ENCODE measurements at regions of chr9 and their contacts with region 1.

Region 1: DNA sequence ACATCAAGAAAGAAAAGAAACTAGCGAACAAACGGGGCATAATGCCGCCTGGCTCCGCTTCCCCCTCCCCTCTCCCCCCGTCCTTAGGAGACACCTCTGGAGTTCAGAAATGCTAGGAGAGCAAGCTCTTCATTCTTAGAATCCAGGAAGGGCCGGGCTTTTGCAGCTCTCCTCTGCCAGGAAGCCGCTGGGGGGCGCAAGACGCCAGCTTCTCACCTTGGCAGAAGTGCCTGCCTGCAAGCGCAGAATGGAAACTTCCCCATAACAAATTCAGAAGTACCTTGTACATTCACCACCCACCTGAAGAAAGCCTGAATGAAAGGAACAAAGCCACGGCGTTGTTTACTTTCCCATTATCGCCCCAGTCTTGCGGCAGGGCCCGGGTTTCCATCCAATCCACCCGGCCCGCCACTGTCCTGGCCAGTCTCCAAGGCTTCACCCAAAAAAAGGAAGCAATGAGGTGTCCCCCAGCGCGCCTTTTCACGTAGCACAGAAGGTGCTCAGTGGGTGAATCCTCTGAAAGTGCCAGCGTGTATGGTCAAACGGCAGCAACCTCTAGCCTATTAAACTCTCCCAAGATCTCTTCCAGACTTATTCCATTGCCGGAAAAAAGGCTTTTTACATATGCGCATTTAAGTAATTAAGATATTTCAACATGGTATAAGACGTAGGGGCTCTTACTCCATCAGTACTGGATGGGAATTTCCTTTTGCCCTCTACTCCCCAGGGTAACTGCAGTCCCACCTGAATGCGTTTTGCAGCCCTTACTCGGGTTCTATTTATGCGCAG is 1.6 kb upstream of the GADD45G start:
- DNase-seq: peak; percentile 70
- H3K4me3 ChIP-seq: peak overlapping the region; percentile 47 to 61
- H3K27ac ChIP-seq: peak overlapping the region in 1 of 2 experiments; percentile 93; a peak in 2 of 4 replicates
- H3K4me1 ChIP-seq: peaks cover 24 to 40% of the 10 kb centered on the region in 2 experiments
- H3K27me3 ChIP-seq: peaks cover 21% of the 10 kb centered on the region; the same call in 1 of the 2 replicates
- CTCF ChIP-seq: peak; percentile 92
- EP300 ChIP-seq: no peak
- RAD21 ChIP-seq: peak; percentile 98

Region 2: GRCh38 chr9:89410641-89411350 is 192.4 kb before region 1 on chr9:
- CTCF ChIA-PET with region 1: no interaction called
- POLR2A ChIA-PET with region 1: no interaction called
- DNase-seq: no peak
- H3K4me3 ChIP-seq: no peak overlapping the region
- H3K27ac ChIP-seq: no peak overlapping the region; a peak in 1 of 4 replicates
- H3K4me1 ChIP-seq: peaks cover 0 to 66% of the 10 kb centered on the region in 2 experiments; a peak in 2 of 4 replicates
- H3K27me3 ChIP-seq: no peaks in the 10 kb centered on the region
- CTCF ChIP-seq: no peak
- EP300 ChIP-seq: no peak
- RAD21 ChIP-seq: no peak

Region 3: GRCh38 chr9:89675058-89675742 is 72.0 kb after region 1 on chr9:
- CTCF ChIA-PET with region 1: interaction called, 60 read pairs
- POLR2A ChIA-PET with region 1: interaction called, 134 read pairs
- DNase-seq: peak; percentile 89
- H3K4me3 ChIP-seq: no peak overlapping the region; a peak in 1 of 4 replicates
- H3K27ac ChIP-seq: peak overlapping the region in 1 of 2 experiments; percentile 100; a peak in 2 of 4 replicates
- H3K4me1 ChIP-seq: peaks cover 0 to 68% of the 10 kb centered on the region in 2 experiments; a peak in 3 of 4 replicates
- H3K27me3 ChIP-seq: no peaks in the 10 kb centered on the region
- CTCF ChIP-seq: no peak
- EP300 ChIP-seq: peak in 1 of 2 experiments; percentile 91; a peak in 2 of 4 replicates
- RAD21 ChIP-seq: peak; percentile 47

Region 4: DNA sequence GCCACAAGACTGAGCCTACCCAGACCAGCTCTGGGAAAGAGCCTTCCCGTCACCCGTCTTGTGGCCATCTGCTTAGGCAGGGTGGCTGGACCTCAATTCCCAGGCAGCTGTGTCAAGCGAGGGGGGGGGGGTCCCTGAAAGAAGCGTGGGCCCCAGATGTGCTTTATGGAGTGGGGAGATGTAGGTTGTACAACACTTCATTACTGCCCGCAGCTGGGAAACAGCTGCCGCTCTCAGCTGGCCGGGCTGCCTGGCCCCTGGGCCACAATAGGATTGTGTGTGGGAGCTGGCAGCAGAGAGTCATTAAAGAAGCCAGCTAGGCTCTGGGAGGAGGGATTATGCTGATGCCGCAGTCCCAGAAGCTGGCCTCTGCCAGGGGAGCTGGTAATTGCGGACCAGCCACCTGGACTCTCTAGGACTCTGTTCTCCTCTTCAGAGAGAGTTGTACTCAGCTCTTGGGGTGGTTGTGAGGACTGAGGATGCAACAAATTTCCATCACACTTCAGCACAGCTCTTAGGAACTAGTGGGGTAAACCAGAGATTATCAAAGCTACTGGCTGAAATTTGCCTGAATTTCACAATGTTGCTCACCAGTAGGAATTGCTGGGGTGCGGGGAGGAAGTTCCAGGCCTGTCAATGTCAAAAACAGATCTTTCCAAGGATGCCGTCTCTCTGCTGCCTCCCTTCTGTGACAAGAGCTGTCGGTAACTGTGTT is 147.1 kb after region 1 on chr9:
- CTCF ChIA-PET with region 1: interaction called, 22 read pairs
- POLR2A ChIA-PET with region 1: interaction called, 27 read pairs
- DNase-seq: peak; percentile 71
- H3K4me3 ChIP-seq: no peak overlapping the region
- H3K27ac ChIP-seq: peak overlapping the region in 1 of 2 experiments; percentile 74; a peak in 2 of 4 replicates
- H3K4me1 ChIP-seq: peaks cover 0 to 62% of the 10 kb centered on the region in 2 experiments; a peak in 2 of 4 replicates
- H3K27me3 ChIP-seq: no peaks in the 10 kb centered on the region
- CTCF ChIP-seq: no peak
- EP300 ChIP-seq: peak in 1 of 2 experiments; percentile 40; a peak in 1 of 4 replicates
- RAD21 ChIP-seq: peak; percentile 35

Region 5: DNA sequence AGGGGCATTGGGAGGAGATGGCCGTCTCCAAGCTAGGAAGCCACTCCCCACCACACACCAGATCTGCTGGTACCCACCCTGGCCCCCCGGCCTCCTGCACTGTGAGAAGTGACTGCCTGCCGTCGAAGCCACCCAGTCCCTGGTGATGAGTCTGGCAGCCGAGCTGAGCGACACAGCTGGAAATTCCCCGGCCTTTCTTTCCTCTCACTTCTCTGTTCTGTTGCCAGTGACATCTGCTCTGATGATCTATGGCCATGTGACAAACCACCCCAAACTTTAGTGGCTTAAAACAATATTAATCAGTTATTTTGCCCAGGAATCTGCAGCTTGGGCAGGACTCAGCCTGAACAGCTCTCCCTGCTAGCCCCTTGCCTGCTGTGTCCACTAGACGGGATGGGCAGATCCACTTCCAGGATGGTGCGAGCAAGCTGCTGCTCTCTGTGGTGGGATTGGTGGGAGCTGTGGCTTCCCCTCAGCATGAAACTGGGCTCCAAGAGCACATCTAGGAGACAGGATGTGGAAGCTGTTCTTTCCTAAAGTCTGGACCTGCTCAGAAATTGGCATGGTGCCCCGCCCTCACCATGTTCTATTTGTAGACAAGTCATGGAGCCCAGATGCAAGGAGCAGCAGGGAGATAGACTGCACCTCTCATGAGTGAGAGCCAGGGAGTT is 212.9 kb after region 1 on chr9:
- CTCF ChIA-PET with region 1: interaction called, 10 read pairs
- POLR2A ChIA-PET with region 1: interaction called, 5 read pairs
- DNase-seq: no peak
- H3K4me3 ChIP-seq: no peak overlapping the region
- H3K27ac ChIP-seq: no peak overlapping the region
- H3K4me1 ChIP-seq: peaks cover 0 to 25% of the 10 kb centered on the region in 2 experiments; a peak in 1 of 4 replicates
- H3K27me3 ChIP-seq: no peaks in the 10 kb centered on the region
- CTCF ChIP-seq: no peak
- EP300 ChIP-seq: no peak
- RAD21 ChIP-seq: no peak

Region 6: GRCh38 chr9:90070931-90071660 is 467.9 kb after region 1 on chr9:
- CTCF ChIA-PET with region 1: interaction called, 12 read pairs
- POLR2A ChIA-PET with region 1: no interaction called
- DNase-seq: no peak
- H3K4me3 ChIP-seq: no peak overlapping the region
- H3K27ac ChIP-seq: no peak overlapping the region
- H3K4me1 ChIP-seq: no peaks in the 10 kb centered on the region; a peak in 1 of 4 replicates
- H3K27me3 ChIP-seq: no peaks in the 10 kb centered on the region
- CTCF ChIP-seq: no peak
- EP300 ChIP-seq: no peak
- RAD21 ChIP-seq: no peak

Region 7: GRCh38 chr9:90112788-90113187 is 509.6 kb after region 1 on chr9:
- CTCF ChIA-PET with region 1: interaction called, 604 read pairs
- POLR2A ChIA-PET with region 1: interaction called, 3 read pairs
- DNase-seq: no peak
- H3K4me3 ChIP-seq: no peak overlapping the region
- H3K27ac ChIP-seq: no peak overlapping the region
- H3K4me1 ChIP-seq: no peaks in the 10 kb centered on the region
- H3K27me3 ChIP-seq: no peaks in the 10 kb centered on the region
- CTCF ChIP-seq: no peak
- EP300 ChIP-seq: no peak
- RAD21 ChIP-seq: no peak

Measured in SK-N-SH (cell line).